ENCODE measurements at regions of chr16 and their contacts with region 1.

Region 1: DNA sequence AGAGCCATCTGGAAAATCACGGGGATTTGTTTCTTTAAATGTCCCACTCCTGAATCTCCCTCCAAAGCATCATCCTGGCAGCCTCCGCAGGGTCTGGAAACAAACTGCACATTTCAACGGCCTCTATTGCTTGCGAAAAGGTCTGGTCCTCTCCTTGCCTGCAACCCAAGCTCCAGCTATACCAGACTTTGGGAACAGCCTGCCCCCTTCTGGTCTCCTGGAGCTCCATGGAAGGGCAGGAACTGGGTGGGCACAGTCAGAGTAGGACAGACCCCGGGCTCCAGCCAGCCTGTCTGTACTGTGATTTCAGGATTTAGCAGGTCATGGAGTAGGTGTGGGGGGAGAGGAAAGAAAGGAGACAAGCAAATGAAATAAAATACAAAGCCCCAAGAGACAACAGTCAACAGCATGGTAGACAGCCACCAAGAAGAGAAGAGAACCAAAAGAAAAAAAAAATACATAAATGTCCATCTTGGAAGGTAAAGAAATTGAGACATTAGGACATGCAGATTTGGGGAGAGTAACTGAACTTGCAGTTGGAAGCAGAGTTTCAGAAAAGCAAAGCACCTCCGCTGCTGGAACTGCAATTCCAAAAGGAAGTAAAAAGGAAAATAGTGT is 2.7 kb downstream of the XYLT1 start:
- DNase-seq: peak; percentile 68 to 90
- H3K4me3 ChIP-seq: no peak overlapping the region
- CTCF ChIP-seq: no peak
- POLR2A ChIP-seq: no peak

Region 2: DNA sequence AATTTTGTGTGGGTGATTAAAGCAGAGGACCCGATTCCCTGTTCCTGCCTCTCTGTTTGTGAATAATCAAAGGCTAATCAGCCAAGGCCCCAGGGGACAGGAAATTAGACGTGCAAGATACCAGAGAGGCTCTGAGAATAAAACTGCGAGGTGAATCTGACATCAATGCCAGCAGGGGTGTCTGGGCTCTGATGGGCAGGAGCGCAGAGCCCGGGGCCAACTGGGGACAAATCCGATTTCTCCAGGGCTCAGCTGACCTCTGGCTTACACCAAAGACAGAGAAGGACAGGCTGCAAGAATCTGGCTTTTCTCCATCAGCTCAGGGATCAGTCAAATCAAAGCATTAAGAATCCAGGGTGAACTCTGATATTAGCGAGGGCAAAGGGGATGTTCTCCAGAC is 171.6 kb before region 1 on chr16:
- intact Hi-C with region 1: loop called (anchors 10 kb)
- DNase-seq: no peak
- H3K4me3 ChIP-seq: no peak overlapping the region
- CTCF ChIP-seq: no peak
- POLR2A ChIP-seq: no peak